Heart right ventricle (tissue), 16 donors: ENCODE measurements at regions of chr1 and their contacts with region 1.

Region 1: DNA sequence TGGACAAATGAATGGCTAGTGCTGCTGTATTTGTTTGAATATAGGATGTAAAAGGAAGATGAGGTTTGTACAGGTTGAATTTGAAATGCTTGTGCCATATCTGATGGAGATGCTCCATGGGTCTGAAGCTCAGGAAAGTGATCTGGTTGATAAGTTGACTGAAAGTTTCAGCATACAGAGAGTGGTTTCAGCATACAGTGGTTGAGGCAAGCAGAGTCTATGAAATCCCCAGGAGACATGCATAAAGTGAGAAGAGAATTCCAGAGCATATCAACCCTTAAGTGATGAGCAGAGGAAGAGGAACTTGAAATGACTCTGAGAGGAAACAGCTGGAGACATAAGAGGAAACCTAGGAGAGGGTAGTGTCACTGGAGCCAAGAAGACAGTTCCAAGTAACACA is 21.7 kb downstream of the TCHHL1 start:
- DNase-seq: no peak
- ATAC-seq: no peak
- H3K4me3 ChIP-seq: no peak overlapping the region
- H3K27ac ChIP-seq: no peak overlapping the region
- H3K4me1 ChIP-seq: no peaks in the 10 kb centered on the region
- H3K27me3 ChIP-seq: peaks cover 0 to 54% (median 25%) of the 10 kb centered on the region in 7 donors
- CTCF ChIP-seq: no peak

Region 2: GRCh38 chr1:151945725-151946364 is 121.3 kb before region 1 on chr1:
- intact Hi-C with region 1: no loop called
- DNase-seq: peak; percentile 76 to 92
- ATAC-seq: peak; percentile 77 to 94 (median 88)
- H3K4me3 ChIP-seq: peak overlapping the region in 3 of 10 donors; percentile 1 to 20 (median 6)
- H3K27ac ChIP-seq: peak overlapping the region; percentile 66 to 89 (median 78)
- H3K4me1 ChIP-seq: peaks cover 5 to 60% (median 33%) of the 10 kb centered on the region in 9 donors
- H3K27me3 ChIP-seq: no peaks in the 10 kb centered on the region
- CTCF ChIP-seq: no peak

Region 3: DNA sequence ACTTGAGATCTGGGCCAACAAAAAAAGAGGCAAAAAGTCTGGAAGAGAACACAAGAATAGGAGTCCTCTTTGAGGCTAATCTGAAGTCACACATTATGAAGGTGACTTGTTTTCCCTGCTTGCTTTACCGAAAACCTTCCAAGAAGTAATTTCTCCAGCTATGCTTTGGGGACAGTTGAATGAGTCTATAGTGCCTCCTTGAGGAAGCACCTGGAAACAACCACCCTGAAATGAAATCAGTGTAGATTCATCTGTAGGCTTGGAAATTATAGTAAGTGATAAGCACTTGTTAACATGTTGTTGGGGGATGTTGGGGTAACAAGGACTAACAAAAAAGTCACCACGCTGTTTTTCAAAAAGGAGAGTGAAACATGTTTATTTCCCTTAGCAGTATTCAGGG is 115.3 kb after region 1 on chr1:
- intact Hi-C with region 1: loop called in 1 of 10 experiments (anchors 5 kb)
- DNase-seq: no peak
- ATAC-seq: no peak
- H3K4me3 ChIP-seq: no peak overlapping the region
- H3K27ac ChIP-seq: no peak overlapping the region
- H3K4me1 ChIP-seq: peaks cover 0 to 8% (median 0%) of the 10 kb centered on the region in 9 donors
- H3K27me3 ChIP-seq: peaks cover 0 to 6% (median 0%) of the 10 kb centered on the region in 7 donors
- CTCF ChIP-seq: peak in 7 of 9 donors; percentile 36 to 59 (median 40)